A549 (cell line): ENCODE measurements at regions of chr17 and their contacts with region 1.

Region 1: DNA sequence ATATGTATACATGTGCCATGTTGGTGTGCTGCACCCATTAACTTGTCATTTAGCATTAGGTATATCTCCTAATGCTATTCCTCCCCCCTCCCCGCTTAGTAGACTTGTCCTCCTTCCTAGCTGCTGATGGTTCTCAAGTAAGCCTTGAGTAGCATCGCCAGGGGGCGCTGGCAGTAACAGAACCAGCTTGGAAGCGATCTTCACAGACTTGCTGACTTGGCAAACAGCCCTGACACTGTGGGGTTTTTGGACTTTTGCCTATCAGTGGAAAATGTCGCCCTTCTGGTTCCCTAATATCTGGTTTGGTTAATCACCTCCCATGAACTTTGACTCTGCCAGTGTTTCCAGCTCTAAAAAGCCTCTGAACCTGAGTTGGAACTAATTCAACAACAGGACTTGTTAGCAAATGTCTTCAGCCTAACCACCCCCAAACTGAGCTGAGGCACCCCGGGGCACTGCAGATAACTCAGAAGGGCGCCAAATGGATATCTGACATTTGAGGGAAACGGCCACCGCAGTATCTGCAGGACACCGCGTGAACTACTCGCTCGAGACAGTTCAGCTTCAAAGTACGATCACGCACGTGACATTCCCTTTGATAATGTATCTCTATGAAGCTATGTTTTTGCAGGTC is 15.4 kb upstream of the SPATA32 start:
- DNase-seq: peak; percentile 96
- ATAC-seq: peak; percentile 80 to 82
- H3K4me3 ChIP-seq: no peak overlapping the region
- H3K27ac ChIP-seq: peak overlapping the region; percentile 52 to 72
- H3K4me1 ChIP-seq: peaks cover 29% of the 10 kb centered on the region
- CTCF ChIP-seq: peak; percentile 92
- EP300 ChIP-seq: no peak
- POLR2A ChIP-seq: no peak
- RAD21 ChIP-seq: peak; percentile 91 to 93

Region 2: GRCh38 chr17:45218895-45219661 is 58.3 kb before region 1 on chr17:
- CTCF ChIA-PET with region 1: interaction called, 182 read pairs
- POLR2A ChIA-PET with region 1: no interaction called
- DNase-seq: peak; percentile 85 to 87
- ATAC-seq: peak; percentile 61 to 82
- H3K4me3 ChIP-seq: no peak overlapping the region
- H3K27ac ChIP-seq: peak overlapping the region; percentile 97
- H3K4me1 ChIP-seq: peaks cover 37% of the 10 kb centered on the region
- CTCF ChIP-seq: peak; percentile 99
- EP300 ChIP-seq: no peak
- POLR2A ChIP-seq: no peak
- RAD21 ChIP-seq: peak; percentile 99 to 100

Region 3: GRCh38 chr17:45247429-45248131 is 29.8 kb before region 1 on chr17:
- CTCF ChIA-PET with region 1: interaction called, 18 read pairs
- POLR2A ChIA-PET with region 1: no interaction called
- DNase-seq: peak; percentile 99 to 100
- ATAC-seq: peak; percentile 79 to 91
- H3K4me3 ChIP-seq: peak overlapping the region; percentile 89
- H3K27ac ChIP-seq: peak overlapping the region; percentile 93 to 96
- H3K4me1 ChIP-seq: peaks cover 49% of the 10 kb centered on the region
- CTCF ChIP-seq: no peak
- EP300 ChIP-seq: peak; percentile 78 to 91; a peak in 3 of 5 replicates
- POLR2A ChIP-seq: peak; percentile 70
- RAD21 ChIP-seq: no peak; a peak in 1 of 5 replicates

Region 4: DNA sequence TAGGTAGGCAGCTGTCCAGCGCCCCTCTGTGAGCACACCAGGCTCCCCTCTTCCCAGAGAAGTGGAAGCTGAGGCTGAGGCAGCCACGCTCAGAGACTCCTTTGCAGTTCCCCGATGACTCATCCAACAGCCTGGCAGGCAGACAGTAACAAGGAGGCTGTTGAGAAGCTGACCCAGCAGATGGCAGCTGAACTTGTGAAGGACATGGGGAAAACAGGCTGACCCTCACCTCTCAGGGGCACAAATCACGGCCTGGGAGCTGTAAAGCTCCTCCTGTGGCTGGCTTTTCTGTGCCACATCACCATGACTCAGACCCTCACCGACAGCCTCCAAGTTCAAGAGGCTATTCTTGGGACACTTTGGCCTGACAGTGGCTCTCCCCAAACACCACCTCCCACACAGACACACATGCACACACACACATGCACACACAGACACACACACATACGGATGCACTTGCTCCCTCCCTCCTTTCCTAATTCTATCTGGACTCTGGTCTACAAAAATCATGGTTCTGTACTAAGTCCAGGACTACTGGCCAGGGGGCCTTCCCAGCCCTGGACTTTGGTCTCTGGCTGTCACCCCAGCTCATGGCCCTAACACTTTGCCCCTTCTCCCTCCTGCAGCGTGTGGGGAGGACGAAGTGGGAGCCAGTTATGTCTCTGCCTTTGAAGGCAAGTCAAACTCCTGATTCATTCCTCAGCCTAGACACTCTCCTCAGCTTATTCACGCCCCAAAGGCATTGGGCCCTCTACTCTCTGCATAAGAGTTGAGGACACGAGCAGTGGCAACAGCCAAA is 16.3 kb after region 1 on chr17:
- CTCF ChIA-PET with region 1: interaction called, 291 read pairs
- POLR2A ChIA-PET with region 1: no interaction called
- DNase-seq: peak; percentile 93 to 97
- ATAC-seq: peak; percentile 84 to 86
- H3K4me3 ChIP-seq: peak overlapping the region; percentile 8; the same call in 1 of the 3 replicates
- H3K27ac ChIP-seq: peak overlapping the region; percentile 90 to 92
- H3K4me1 ChIP-seq: peaks cover 90% of the 10 kb centered on the region
- CTCF ChIP-seq: peak; percentile 34
- EP300 ChIP-seq: peak; percentile 55 to 57; a peak in 2 of 5 replicates
- POLR2A ChIP-seq: no peak
- RAD21 ChIP-seq: peak; percentile 57 to 60

Region 5: GRCh38 chr17:45317112-45317928 is 40.0 kb after region 1 on chr17:
- CTCF ChIA-PET with region 1: interaction called, 181 read pairs
- POLR2A ChIA-PET with region 1: interaction called, 19 read pairs
- DNase-seq: peak; percentile 100
- ATAC-seq: peak; percentile 79 to 83
- H3K4me3 ChIP-seq: peak overlapping the region; percentile 69
- H3K27ac ChIP-seq: peak overlapping the region; percentile 95
- H3K4me1 ChIP-seq: peaks cover 73% of the 10 kb centered on the region
- CTCF ChIP-seq: no peak
- EP300 ChIP-seq: no peak
- POLR2A ChIP-seq: peak; percentile 68
- RAD21 ChIP-seq: no peak

Region 6: GRCh38 chr17:45364531-45365390 is 87.4 kb after region 1 on chr17:
- CTCF ChIA-PET with region 1: interaction called, 27 read pairs
- POLR2A ChIA-PET with region 1: no interaction called
- DNase-seq: peak in 1 of 2 experiments; percentile 44
- ATAC-seq: peak; percentile 72 to 78; a peak in 5 of 6 replicates
- H3K4me3 ChIP-seq: no peak overlapping the region
- H3K27ac ChIP-seq: peak overlapping the region; percentile 55 to 82; a peak in 5 of 6 replicates
- H3K4me1 ChIP-seq: peaks cover 34% of the 10 kb centered on the region
- CTCF ChIP-seq: no peak
- EP300 ChIP-seq: no peak
- POLR2A ChIP-seq: no peak
- RAD21 ChIP-seq: no peak

Region 7: GRCh38 chr17:45428050-45428617 is 150.8 kb after region 1 on chr17:
- CTCF ChIA-PET with region 1: interaction called, 58 read pairs
- POLR2A ChIA-PET with region 1: no interaction called
- DNase-seq: peak; percentile 83 to 94
- ATAC-seq: peak; percentile 17 to 66
- H3K4me3 ChIP-seq: no peak overlapping the region
- H3K27ac ChIP-seq: peak overlapping the region in 1 of 2 experiments; percentile 56; a peak in 2 of 6 replicates
- H3K4me1 ChIP-seq: peaks cover 38% of the 10 kb centered on the region
- CTCF ChIP-seq: peak; percentile 97
- EP300 ChIP-seq: no peak
- POLR2A ChIP-seq: no peak
- RAD21 ChIP-seq: peak; percentile 90 to 93

Region 8: DNA sequence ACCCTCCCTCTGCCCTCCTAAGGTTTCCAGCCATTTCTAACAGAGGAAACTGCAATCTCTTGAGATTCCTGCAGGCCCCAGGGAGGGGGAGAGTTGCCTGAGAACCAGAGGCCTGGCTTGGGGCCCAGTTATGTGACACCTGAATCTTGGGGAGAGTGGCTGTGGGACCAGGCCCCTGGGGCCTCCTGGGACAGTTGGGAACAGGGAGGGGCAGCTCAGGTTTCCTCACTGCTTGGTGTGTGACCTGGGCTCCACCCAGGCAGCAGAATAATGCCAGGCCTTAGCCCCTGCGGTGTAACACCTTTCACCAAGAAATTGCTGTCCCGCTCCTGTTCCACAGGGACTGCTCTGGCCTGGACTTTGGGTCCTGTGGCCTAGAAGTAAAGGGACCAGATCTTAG is 462.5 kb after region 1 on chr17:
- CTCF ChIA-PET with region 1: no interaction called
- POLR2A ChIA-PET with region 1: no interaction called
- DNase-seq: no peak
- ATAC-seq: no peak
- H3K4me3 ChIP-seq: no peak overlapping the region
- H3K27ac ChIP-seq: no peak overlapping the region
- H3K4me1 ChIP-seq: no peaks in the 10 kb centered on the region
- CTCF ChIP-seq: no peak
- EP300 ChIP-seq: no peak
- POLR2A ChIP-seq: no peak
- RAD21 ChIP-seq: no peak